PC-3 (cell line): ENCODE measurements at regions of chr11 and their contacts with region 1.

Region 1: DNA sequence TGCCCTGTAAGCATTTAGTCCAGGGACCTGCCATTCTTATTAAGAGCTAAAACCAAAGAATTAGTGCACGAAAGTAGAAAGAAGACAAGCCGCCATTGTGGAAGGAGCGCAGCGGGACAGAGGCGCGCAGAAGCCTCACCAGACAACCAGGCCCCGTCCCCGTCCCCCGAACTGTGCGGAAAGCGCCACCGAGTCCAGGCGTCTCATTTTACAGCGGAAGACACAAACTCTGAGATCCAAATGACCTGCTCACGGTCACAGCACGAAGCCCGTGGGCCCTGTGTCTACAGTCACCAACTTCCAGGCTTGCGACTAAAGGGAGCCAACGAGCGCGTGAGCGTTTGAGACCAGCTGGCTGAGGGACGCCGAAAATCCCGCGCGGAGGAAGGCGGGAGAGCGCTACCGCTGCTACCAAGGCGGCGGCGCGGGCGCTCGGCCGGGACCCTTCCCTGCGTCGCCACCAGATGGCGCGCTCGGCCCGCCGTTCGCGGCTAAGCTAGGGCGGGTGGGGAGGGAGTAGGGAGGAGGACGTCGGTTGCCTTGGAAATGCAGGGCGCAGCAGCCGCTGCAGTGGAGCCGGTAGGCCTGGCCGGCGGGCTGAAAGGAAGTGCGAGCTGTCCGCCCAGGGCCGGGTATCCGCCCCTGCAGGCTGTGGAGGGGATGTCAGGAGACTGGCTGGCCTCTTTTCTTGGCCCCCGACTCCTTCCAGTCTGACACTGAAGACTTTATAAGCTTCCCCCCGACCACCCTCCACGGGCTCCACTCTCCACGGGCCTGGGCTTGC is 434 bp upstream of the CCDC83 start:
- DNase-seq: peak; percentile 99
- ATAC-seq: peak; percentile 94
- H3K4me3 ChIP-seq: peak overlapping the region; percentile 78
- H3K27ac ChIP-seq: peak overlapping the region; percentile 84
- H3K4me1 ChIP-seq: peaks cover 17% of the 10 kb centered on the region
- H3K27me3 ChIP-seq: no peaks in the 10 kb centered on the region
- CTCF ChIP-seq: peak; percentile 68

Region 2: DNA sequence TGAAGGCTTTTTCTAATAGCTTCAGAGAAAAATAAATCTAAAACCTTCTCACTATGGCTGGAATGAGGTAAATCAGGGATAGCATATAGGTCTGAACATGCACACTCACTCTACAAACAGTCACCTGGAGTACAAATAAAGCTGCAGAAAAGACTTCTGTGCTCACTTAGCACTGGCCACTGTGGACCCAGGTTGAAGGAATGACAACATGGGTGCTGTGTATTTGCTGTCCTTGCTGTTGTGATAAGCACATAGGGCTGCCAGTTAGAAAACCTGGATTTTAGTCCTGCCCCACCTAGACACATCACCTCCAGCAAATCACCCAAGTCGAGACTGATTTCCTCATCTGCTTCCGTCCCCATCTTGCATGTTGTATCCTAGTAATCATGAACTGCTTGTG is 1049.3 kb after region 1 on chr11:
- CTCF ChIA-PET with region 1: no interaction called
- POLR2A ChIA-PET with region 1: interaction called, 16 read pairs
- intact Hi-C with region 1: no loop called
- DNase-seq: no peak
- ATAC-seq: no peak
- H3K4me3 ChIP-seq: no peak overlapping the region
- H3K27ac ChIP-seq: no peak overlapping the region
- H3K4me1 ChIP-seq: no peaks in the 10 kb centered on the region
- H3K27me3 ChIP-seq: no peaks in the 10 kb centered on the region
- CTCF ChIP-seq: no peak